ENCODE measurements at regions of chr6 and their contacts with region 1.

Region 1: GRCh38 chr6:127420556-127420955 is 38.6 kb downstream of the KIAA0408 start:
- DNase-seq: peak; percentile 91
- H3K4me3 Mint-ChIP-seq: no peak overlapping the region
- H3K27ac Mint-ChIP-seq: peak overlapping the region; percentile 55
- H3K4me1 Mint-ChIP-seq: peaks cover 14% of the 10 kb centered on the region
- H3K27me3 Mint-ChIP-seq: no peaks in the 10 kb centered on the region
- CTCF ChIP-seq: peak; percentile 46

Region 2: DNA sequence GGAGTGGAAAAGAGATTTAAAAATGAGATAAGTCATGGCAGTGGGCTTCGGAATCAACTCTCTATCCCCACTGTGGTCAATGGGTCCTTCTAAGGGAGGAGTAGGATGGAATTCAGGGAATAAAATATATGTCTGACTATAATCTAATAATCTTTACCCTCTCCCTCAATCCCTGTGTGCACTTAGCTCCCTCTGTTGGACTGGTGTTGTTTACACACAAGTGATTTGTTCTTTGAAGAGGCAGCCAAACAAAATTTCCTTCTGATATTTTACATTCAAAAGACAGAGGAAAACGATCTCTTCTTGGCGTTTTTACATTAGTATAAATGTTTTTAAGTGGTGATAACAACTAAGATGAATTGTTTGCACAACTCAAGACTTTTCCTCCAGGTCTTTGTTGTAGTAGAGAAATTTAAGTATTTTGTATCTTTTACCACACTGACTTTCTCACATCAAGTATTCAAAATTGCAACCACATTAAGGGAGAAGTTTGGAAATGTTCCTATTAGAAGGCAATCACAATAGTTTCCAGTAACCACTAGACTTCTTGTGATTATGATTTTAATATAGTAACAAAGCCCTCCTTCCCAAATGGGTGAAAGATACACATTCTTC is 762.9 kb before region 1 on chr6:
- CTCF ChIA-PET with region 1: no interaction called
- POLR2A ChIA-PET with region 1: no interaction called
- intact Hi-C with region 1: no loop called
- DNase-seq: peak; percentile 52
- H3K4me3 Mint-ChIP-seq: no peak overlapping the region
- H3K27ac Mint-ChIP-seq: no peak overlapping the region
- H3K4me1 Mint-ChIP-seq: no peaks in the 10 kb centered on the region
- H3K27me3 Mint-ChIP-seq: peaks cover 24% of the 10 kb centered on the region
- CTCF ChIP-seq: peak; percentile 66

Region 3: DNA sequence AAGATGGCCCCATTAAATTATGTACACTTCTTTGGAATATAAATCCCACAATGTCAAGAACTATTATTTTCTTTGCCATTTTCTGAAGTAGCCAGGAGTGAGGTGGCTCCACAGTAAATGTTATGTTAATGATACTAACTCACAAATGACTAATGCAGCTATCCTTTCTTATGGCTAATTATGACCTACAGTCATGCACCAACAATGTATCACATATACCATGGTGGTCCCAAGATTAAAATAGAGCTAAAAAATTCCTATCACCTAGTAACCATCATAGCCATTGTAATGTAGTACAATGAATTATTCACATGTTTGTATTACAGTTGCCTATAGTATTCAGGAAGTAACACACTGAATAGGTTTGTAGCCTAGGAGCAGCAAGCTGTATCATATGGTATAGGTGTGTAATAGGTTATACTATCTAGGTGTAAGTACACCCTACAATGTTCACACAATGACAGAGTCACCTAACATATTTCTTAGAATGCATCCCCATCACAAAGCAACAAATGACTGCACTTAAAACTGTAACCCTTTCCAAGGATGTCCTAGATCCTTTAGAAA is 92.4 kb before region 1 on chr6:
- CTCF ChIA-PET with region 1: interaction called, 5 read pairs
- POLR2A ChIA-PET with region 1: interaction called, 3 read pairs
- intact Hi-C with region 1: loop called (anchors 5 kb)
- DNase-seq: no peak
- H3K4me3 Mint-ChIP-seq: no peak overlapping the region
- H3K27ac Mint-ChIP-seq: no peak overlapping the region
- H3K4me1 Mint-ChIP-seq: peaks cover 8% of the 10 kb centered on the region
- H3K27me3 Mint-ChIP-seq: no peaks in the 10 kb centered on the region
- CTCF ChIP-seq: no peak

Region 4: GRCh38 chr6:127342946-127343808 is 77.4 kb before region 1 on chr6 and contains the start of gene ECHDC1:
- CTCF ChIA-PET with region 1: interaction called, 5 read pairs
- POLR2A ChIA-PET with region 1: interaction called, 12 read pairs
- intact Hi-C with region 1: loop called (anchors 1 kb)
- DNase-seq: peak; percentile 70
- H3K4me3 Mint-ChIP-seq: no peak within 1 kb of the TSS
- H3K27ac Mint-ChIP-seq: no peak within 1 kb of the TSS
- H3K4me1 Mint-ChIP-seq: peaks cover 37% of the 10 kb centered on the region
- H3K27me3 Mint-ChIP-seq: no peaks in the 10 kb centered on the region
- CTCF ChIP-seq: no peak
- total RNA-seq, gene ECHDC1: 60.4 and 70.7 TPM in 2 replicates

Region 5: DNA sequence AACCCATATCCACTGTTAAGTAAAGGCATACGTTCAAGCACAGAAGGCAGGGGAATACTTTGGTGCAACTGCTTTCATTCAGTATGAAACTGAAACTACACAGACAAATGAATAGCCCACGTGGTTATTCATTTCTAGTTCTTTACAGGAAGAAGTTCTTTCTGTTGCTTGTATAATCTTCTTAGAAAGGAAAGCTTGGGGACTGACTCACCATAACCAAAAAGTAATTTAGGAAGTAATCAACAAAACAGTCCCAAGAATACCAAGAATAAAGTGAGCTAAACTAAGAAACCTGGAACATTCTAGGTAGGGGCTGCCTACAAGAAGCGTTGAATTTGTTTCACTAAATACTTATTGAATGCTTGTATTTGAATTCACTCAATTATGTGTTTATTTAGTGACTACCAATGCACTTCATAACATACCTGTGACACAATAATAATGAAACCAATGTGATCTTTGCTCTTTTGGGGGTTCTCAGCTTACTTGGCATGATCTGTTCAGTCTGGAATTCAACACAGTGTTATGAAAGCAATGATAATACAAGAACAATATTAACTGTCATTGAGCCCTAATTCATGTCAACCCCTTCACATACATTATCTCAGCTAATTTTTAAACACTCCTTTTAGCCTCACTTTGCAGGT is 63.8 kb after region 1 on chr6:
- CTCF ChIA-PET with region 1: no interaction called
- POLR2A ChIA-PET with region 1: no interaction called
- intact Hi-C with region 1: no loop called
- DNase-seq: peak; percentile 9
- H3K4me3 Mint-ChIP-seq: peak overlapping the region; percentile 34
- H3K27ac Mint-ChIP-seq: peak overlapping the region; percentile 43
- H3K4me1 Mint-ChIP-seq: peaks cover 33% of the 10 kb centered on the region
- H3K27me3 Mint-ChIP-seq: no peaks in the 10 kb centered on the region
- CTCF ChIP-seq: no peak

Region 6: GRCh38 chr6:127539272-127539671 is 118.7 kb after region 1 on chr6:
- CTCF ChIA-PET with region 1: interaction called, 12 read pairs
- POLR2A ChIA-PET with region 1: no interaction called
- intact Hi-C with region 1: no loop called
- DNase-seq: peak; percentile 14
- H3K4me3 Mint-ChIP-seq: no peak overlapping the region
- H3K27ac Mint-ChIP-seq: no peak overlapping the region
- H3K4me1 Mint-ChIP-seq: peaks cover 5% of the 10 kb centered on the region
- H3K27me3 Mint-ChIP-seq: peaks cover 36% of the 10 kb centered on the region
- CTCF ChIP-seq: peak; percentile 27

Region 7: GRCh38 chr6:127775371-127775770 is 354.8 kb after region 1 on chr6:
- CTCF ChIA-PET with region 1: no interaction called
- POLR2A ChIA-PET with region 1: no interaction called
- intact Hi-C with region 1: no loop called
- DNase-seq: no peak
- H3K4me3 Mint-ChIP-seq: no peak overlapping the region
- H3K27ac Mint-ChIP-seq: no peak overlapping the region
- H3K4me1 Mint-ChIP-seq: no peaks in the 10 kb centered on the region
- H3K27me3 Mint-ChIP-seq: peaks cover 3% of the 10 kb centered on the region
- CTCF ChIP-seq: no peak

Region 8: DNA sequence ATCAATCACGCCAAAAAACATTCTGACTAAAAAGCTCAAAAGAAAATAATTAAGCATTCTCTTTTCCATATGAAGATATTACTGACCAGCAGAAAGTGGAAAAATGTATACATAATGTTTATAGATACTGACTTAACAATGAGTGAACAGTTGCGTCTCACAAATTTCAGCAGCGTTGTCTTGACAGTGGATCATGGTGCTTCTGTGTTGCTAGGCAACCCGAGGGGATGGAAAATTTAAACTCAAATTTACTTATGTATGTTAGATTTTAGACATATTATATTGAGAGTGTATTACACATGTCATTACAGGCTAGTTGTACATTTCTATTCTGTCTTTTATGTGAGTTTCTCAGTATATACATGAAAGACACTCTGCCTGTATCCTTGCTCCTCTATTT is 1572.6 kb after region 1 on chr6:
- CTCF ChIA-PET with region 1: no interaction called
- POLR2A ChIA-PET with region 1: no interaction called
- intact Hi-C with region 1: no loop called
- DNase-seq: no peak
- H3K4me3 Mint-ChIP-seq: no peak overlapping the region
- H3K27ac Mint-ChIP-seq: no peak overlapping the region
- H3K4me1 Mint-ChIP-seq: no peaks in the 10 kb centered on the region
- H3K27me3 Mint-ChIP-seq: peaks cover 60% of the 10 kb centered on the region
- CTCF ChIP-seq: no peak

Measured in MCF 10A (cell line).